AG04449 (cell line): ENCODE measurements at regions of chr14 and their contacts with region 1.

Region 1: GRCh38 chr14:89630101-89630829 is 213.2 kb upstream of the FOXN3 start:
- DNase-seq: no peak
- H3K4me3 ChIP-seq: no peak overlapping the region
- CTCF ChIP-seq: no peak

Region 2: GRCh38 chr14:89618811-89619551 is 11.3 kb before region 1 on chr14:
- CTCF ChIA-PET with region 1: interaction called, 4 read pairs
- POLR2A ChIA-PET with region 1: interaction called, 10 read pairs
- DNase-seq: no peak
- H3K4me3 ChIP-seq: peak overlapping the region; percentile 74
- CTCF ChIP-seq: no peak

Region 3: GRCh38 chr14:89660166-89660565 is 29.9 kb after region 1 on chr14:
- CTCF ChIA-PET with region 1: no interaction called
- POLR2A ChIA-PET with region 1: no interaction called
- DNase-seq: no peak
- H3K4me3 ChIP-seq: no peak overlapping the region
- CTCF ChIP-seq: no peak